ENCODE measurements at regions of chr12 and their contacts with region 1.

Region 1: DNA sequence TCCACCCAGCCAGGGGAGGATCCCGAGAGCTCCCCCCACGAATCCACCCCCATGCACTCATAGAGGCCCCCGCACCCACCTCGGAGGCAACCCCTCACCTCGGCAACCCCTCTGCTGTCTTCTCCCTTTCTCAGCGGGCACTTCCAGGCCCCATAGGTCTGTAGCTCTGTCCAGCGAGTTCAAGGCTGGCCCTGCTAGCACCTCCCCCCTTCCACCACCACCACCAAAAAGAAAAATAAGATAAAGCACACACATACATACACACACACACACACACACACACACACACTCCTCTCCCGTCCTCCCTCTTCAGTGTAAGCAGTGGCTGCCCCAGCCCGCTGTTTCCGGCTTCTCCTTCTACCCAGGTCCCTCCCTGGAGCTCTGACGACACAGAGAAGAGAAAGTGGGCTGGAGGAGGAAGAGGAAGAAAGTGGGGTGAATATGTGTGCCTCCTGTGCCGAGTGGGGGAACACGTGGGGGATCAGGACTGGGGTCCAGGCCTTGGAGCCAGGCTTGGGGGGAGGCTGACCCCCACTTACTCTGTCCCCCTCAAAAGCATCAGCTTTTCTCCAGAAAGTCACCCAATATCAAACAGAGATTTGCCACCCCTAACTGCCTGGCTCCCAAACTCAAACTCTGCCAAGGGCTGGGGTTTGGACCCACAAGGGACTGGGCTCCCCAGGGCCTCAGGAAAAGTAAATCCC is at the start of gene STAT6:
- DNase-seq: peak; percentile 94
- ATAC-seq: peak; percentile 75
- H3K4me3 Mint-ChIP-seq: peak within 1 kb of the TSS; percentile 91
- H3K27ac Mint-ChIP-seq: peak within 1 kb of the TSS; percentile 95
- H3K4me1 Mint-ChIP-seq: peaks cover 53% of the 10 kb centered on the region
- H3K27me3 Mint-ChIP-seq: no peaks in the 10 kb centered on the region
- total RNA-seq, gene STAT6: 189 TPM

Region 2: DNA sequence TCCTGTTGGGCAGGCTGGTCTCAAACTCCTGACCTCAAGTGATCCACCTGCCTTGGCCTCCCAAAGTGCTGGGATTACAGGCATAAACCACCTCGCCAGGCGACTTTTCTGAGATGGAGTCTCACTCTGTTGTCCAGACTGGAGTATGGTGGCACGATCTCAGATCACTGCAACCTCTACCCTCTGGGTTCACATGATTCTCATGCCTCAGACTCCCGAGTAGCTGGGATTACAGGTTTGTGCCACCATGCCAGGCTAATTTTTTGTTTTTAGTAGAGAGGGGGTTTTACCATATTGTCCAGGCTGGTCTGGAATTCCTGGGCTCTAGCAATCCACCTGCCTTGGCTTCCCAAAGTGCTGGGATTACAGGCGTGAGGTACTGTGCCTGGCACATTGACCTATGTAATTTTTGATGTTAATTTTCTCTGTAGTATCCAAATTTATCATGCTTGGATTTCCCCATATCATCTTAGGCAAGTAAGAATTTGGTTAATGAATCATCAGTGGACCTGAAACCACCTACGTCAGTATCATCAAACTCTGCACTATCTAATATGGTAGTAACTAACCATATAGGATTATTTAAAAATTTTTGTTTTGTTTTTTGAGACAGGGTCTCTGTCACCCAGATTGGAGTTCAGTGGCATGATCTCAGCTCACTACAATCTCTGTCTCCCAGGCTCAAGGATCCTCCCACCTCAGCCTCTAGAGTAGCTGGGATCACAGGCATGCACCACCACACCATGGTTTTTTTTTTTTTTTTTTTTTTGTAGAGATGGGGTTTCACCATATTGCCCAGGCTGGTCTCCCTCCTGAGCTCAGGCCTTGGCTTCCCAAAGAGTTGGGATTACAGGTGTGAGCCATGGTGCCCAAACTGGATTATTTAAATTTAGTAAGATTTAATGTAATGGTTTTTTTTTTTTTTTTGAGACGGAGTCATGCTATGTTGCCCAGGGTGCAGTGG is 453.5 kb before region 1 on chr12:
- CTCF ChIA-PET with region 1: no interaction called
- POLR2A ChIA-PET with region 1: no interaction called
- DNase-seq: no peak
- ATAC-seq: peak; percentile 27
- H3K4me3 Mint-ChIP-seq: no peak overlapping the region
- H3K27ac Mint-ChIP-seq: no peak overlapping the region
- H3K4me1 Mint-ChIP-seq: peaks cover 2% of the 10 kb centered on the region
- H3K27me3 Mint-ChIP-seq: no peaks in the 10 kb centered on the region

Region 3: DNA sequence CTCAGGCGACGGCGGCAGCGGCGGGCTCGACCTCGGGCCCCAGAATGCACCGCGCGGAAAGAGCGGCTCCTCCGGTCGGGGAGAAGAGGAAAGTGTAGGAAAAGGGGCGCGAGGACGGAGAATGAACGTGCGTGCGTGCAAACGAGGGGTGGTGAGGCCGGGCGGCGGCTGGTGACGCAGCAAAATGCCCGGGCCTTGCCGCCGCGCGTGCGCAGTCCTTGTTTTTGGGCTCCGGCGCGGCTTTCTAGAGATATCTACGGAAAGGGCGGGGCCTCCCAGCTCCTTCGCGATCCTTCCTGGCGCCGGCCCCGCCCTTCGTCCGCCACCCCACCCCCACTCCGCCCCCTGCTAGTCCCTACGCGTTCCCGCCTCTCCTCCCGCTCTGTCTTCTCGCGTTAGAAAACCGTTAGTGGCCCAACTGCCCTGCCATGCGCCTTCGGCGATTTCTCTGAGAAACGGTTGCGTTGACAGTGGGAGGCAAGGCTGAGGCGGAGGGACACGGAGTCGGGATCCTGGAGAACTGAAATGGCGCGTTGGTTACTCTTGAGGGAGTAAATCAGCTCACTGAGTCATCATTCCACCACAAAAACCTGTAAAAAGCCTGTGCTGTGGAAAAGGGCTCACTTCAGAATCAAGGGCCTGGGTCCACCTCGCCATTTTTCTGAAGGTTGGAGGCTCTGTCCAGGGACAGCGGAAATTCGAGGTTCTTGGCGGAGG is 422.9 kb before region 1 on chr12 and contains the start of gene PTGES3:
- CTCF ChIA-PET with region 1: interaction called, 11 read pairs
- POLR2A ChIA-PET with region 1: interaction called, 5 read pairs
- DNase-seq: peak; percentile 99
- ATAC-seq: peak; percentile 76
- H3K4me3 Mint-ChIP-seq: peak within 1 kb of the TSS; percentile 99
- H3K27ac Mint-ChIP-seq: peak within 1 kb of the TSS; percentile 99
- H3K4me1 Mint-ChIP-seq: peaks cover 17% of the 10 kb centered on the region
- H3K27me3 Mint-ChIP-seq: no peaks in the 10 kb centered on the region
- total RNA-seq, gene PTGES3: 273 to 290 TPM

Region 4: GRCh38 chr12:57012600-57013465 is 98.3 kb before region 1 on chr12:
- CTCF ChIA-PET with region 1: interaction called, 64 read pairs
- POLR2A ChIA-PET with region 1: interaction called, 22 read pairs
- DNase-seq: no peak
- ATAC-seq: no peak
- H3K4me3 Mint-ChIP-seq: no peak overlapping the region
- H3K27ac Mint-ChIP-seq: no peak overlapping the region
- H3K4me1 Mint-ChIP-seq: peaks cover 40% of the 10 kb centered on the region
- H3K27me3 Mint-ChIP-seq: peaks cover 10% of the 10 kb centered on the region

Region 5: GRCh38 chr12:57063991-57064685 is 47.0 kb before region 1 on chr12:
- CTCF ChIA-PET with region 1: interaction called, 233 read pairs
- POLR2A ChIA-PET with region 1: interaction called, 84 read pairs
- DNase-seq: peak; percentile 73
- ATAC-seq: peak; percentile 90
- H3K4me3 Mint-ChIP-seq: peak overlapping the region; percentile 76
- H3K27ac Mint-ChIP-seq: peak overlapping the region; percentile 89
- H3K4me1 Mint-ChIP-seq: peaks cover 34% of the 10 kb centered on the region
- H3K27me3 Mint-ChIP-seq: no peaks in the 10 kb centered on the region

Region 6: GRCh38 chr12:57088459-57089248 is 22.5 kb before region 1 on chr12 and contains the start of gene NAB2:
- CTCF ChIA-PET with region 1: interaction called, 233 read pairs
- POLR2A ChIA-PET with region 1: interaction called, 58 read pairs
- DNase-seq: peak; percentile 98
- ATAC-seq: peak; percentile 78
- H3K4me3 Mint-ChIP-seq: peak within 1 kb of the TSS; percentile 93
- H3K27ac Mint-ChIP-seq: peak within 1 kb of the TSS; percentile 97
- H3K4me1 Mint-ChIP-seq: peaks cover 69% of the 10 kb centered on the region
- H3K27me3 Mint-ChIP-seq: no peaks in the 10 kb centered on the region
- total RNA-seq, gene NAB2: 12.9 to 13.7 TPM

Region 7: DNA sequence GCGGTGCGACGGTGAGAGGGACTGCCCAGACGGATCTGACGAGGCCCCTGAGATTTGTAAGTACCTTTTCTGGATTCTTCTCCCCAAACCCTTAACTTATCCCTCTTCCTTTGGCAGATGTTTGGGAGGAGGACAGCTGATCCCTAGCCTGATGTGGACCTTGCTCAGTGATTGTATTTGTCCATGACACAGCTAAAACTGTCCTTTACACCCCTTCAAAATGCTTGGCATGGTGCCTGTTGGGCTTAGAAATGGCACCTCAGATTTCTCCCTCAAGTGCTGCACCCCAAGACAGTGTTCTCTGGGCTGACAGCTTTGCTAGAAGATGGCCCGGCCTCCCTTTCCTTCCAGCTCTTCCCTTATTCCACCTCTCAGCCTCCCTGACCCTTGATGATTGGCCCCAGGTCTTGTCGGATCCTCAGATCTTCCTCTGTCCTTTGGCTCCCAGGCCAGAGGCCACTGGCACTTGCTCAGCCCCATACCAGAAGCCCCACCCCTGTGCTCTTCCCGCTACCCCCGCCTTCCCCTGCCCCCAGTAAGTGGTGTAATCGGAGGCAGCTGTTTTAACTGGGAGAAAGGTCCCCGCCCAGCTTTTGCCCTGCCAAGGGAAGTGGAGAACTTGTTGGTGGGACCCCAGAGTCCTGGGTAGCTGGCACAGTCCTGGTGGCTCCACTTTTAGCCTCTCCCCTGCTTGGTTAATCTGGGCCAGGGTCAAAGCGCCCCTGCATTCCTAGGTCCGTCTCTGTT is 27.5 kb after region 1 on chr12:
- CTCF ChIA-PET with region 1: no interaction called
- POLR2A ChIA-PET with region 1: no interaction called
- DNase-seq: no peak
- ATAC-seq: no peak
- H3K4me3 Mint-ChIP-seq: no peak overlapping the region
- H3K27ac Mint-ChIP-seq: no peak overlapping the region
- H3K4me1 Mint-ChIP-seq: peaks cover 13% of the 10 kb centered on the region
- H3K27me3 Mint-ChIP-seq: peaks cover 3% of the 10 kb centered on the region

Region 8: GRCh38 chr12:57182921-57183790 is 72.0 kb after region 1 on chr12:
- CTCF ChIA-PET with region 1: interaction called, 10 read pairs
- POLR2A ChIA-PET with region 1: interaction called, 3 read pairs
- DNase-seq: peak; percentile 87
- ATAC-seq: peak; percentile 96
- H3K4me3 Mint-ChIP-seq: no peak overlapping the region
- H3K27ac Mint-ChIP-seq: no peak overlapping the region
- H3K4me1 Mint-ChIP-seq: peaks cover 5% of the 10 kb centered on the region
- H3K27me3 Mint-ChIP-seq: no peaks in the 10 kb centered on the region

Region 9: DNA sequence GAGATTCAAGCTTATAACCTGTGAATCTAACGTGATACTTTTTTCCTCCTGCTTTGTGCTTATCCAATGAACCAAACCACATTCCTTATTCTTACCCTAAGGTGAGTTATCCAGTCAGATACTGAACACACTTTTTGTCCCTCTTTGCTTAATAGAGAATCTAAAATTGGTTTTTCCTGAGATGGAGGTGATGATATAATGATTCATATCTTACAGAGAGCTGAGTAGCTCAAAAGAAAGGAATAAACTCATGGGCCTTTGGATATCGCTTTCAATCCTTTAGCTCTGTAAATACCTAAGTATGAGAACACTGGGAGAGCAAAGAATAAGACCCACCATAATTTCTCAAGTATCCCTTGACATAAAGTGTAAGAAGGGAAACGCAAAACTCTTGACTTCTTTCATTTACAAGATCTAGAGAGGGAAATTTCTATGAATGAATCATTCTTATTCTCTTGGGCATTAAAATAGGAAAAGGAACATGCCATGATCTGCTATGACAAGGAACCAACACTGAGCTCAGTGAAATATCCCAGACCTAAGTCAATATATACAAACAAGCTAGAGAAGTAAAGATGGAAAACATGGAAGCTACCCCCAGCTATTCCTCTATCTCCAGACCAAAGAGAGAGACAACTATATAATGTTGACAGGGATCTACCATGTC is 221.6 kb after region 1 on chr12:
- CTCF ChIA-PET with region 1: no interaction called
- POLR2A ChIA-PET with region 1: no interaction called
- DNase-seq: no peak
- ATAC-seq: no peak
- H3K4me3 Mint-ChIP-seq: no peak overlapping the region
- H3K27ac Mint-ChIP-seq: no peak overlapping the region
- H3K4me1 Mint-ChIP-seq: no peaks in the 10 kb centered on the region
- H3K27me3 Mint-ChIP-seq: no peaks in the 10 kb centered on the region

Measured in activated CD8-positive, alpha-beta T cell treated with anti-CD3 and anti-CD28 coated beads, Interleukin-2, amount 10 ng/mL, durations not matched to agents 7 days and 5 days (primary cell).